ENCODE measurements at regions of chr6 and their contacts with region 1.

Region 1: GRCh38 chr6:36678518-36679027 is at the start of gene CDKN1A:
- DNase-seq: peak; percentile 97
- total RNA-seq, gene CDKN1A: 87.4 to 195 TPM

Region 2: GRCh38 chr6:36724514-36725390 is 46.2 kb after region 1 on chr6:
- intact Hi-C with region 1: loop called in 1 of 2 experiments (anchors 5 kb)
- DNase-seq: peak; percentile 85

Measured in posterior vena cava (tissue), 2 donors.